ENCODE measurements at regions of chr14 and their contacts with region 1.

Region 1: DNA sequence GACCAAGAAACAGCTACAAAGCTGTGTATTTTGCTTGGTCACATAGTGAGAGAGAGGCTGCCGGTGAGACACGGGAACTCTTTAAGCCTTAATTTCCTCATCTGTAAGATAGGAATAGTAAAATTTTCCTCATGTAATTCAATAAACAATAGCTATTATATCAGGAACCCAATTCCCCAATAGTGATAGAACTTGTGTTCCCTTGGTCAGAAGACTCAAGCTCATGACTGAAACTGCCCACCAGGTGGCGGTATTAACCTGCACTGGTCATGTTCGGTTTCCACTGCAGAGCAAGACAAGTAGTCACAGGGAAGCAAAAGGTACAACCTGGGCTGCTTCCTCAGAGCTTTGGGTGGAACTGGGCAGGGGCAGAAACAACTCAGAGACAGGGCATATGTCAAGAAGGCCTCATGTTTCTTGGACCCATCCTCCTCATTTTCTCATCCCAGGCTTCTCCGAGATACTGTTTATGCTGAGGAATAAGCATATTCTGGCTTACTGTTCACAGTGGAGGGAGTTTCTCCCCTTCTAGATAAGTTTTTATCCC is 4.2 kb upstream of the AJUBA start:
- DNase-seq: peak; percentile 70
- ATAC-seq: peak; percentile 62
- H3K4me3 Mint-ChIP-seq: no peak overlapping the region
- H3K27ac Mint-ChIP-seq: no peak overlapping the region
- H3K4me1 Mint-ChIP-seq: no peaks in the 10 kb centered on the region
- H3K27me3 Mint-ChIP-seq: no peaks in the 10 kb centered on the region
- CTCF ChIP-seq: peak; percentile 91

Region 2: DNA sequence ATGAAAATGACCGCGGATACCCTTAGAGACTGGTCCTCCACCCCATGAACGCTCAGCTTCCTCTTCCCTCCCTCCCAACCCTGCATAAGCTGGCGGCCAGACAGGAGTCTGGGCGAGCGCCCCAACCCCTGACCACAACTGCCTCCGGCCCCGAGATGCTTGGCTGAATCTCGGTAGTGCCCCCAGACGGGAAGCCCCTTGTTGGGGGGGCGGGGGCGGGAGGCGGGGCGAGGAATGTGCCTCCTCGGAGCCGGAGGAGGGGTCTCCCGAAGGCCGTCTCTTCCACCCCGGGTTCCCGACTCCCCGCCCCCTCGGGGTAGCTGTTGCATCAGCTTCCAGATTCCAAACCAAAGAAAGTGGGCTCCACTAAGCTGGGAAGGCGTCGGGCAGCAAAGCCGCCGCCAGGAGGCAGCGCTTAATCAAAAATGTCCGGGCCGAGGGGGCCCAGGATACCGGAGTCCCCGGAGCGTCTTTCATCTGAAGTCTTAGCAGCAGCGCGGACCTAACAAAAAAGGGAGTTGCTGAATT is 163.9 kb before region 1 on chr14:
- CTCF ChIA-PET with region 1: interaction called, 3 read pairs
- POLR2A ChIA-PET with region 1: no interaction called
- intact Hi-C with region 1: loop called (anchors 2 kb)
- DNase-seq: peak; percentile 69
- ATAC-seq: peak; percentile 76
- H3K4me3 Mint-ChIP-seq: peak overlapping the region; percentile 86
- H3K27ac Mint-ChIP-seq: peak overlapping the region; percentile 92
- H3K4me1 Mint-ChIP-seq: peaks cover 60% of the 10 kb centered on the region
- H3K27me3 Mint-ChIP-seq: no peaks in the 10 kb centered on the region
- CTCF ChIP-seq: no peak

Region 3: DNA sequence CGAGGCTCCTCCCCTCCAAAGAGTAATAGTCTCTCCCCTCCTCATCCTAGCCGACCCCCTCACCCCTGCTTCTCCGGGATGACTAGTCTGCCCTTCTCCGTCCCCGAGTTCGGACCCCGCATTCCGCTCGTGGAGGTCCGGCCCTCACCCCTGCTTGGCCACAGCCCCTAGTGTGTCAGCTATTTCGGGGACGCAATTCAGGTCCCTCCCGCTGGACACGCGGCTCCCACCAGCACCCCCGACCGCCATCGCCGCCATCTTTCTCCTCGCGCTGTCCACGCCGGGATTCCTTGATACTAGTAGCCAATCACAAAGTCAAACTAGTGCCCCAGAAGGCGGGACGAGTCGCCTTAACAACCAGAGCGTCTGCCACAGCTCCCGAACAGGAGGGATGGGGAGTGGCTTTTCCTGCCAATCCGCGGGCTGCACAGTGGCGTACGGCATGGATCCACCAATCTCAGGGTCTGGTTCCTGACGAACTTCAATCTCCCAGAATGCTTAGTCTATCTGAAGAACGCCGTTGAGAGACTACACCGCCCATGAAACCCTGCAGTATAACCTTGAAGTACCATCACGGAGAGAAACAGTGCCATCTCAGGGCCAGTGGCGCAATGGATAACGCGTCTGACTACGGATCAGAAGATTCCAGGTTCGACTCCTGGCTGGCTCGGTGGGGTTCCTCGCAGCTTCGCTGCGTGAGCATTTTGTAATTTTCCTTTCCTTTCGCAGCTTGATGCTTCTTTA is 57.3 kb before region 1 on chr14 and contains the start of gene PRMT5:
- CTCF ChIA-PET with region 1: interaction called, 22 read pairs
- POLR2A ChIA-PET with region 1: no interaction called
- intact Hi-C with region 1: loop called (anchors 1 kb)
- DNase-seq: peak; percentile 83
- ATAC-seq: peak; percentile 93
- H3K4me3 Mint-ChIP-seq: no peak within 1 kb of the TSS
- H3K27ac Mint-ChIP-seq: no peak within 1 kb of the TSS
- H3K4me1 Mint-ChIP-seq: peaks cover 14% of the 10 kb centered on the region
- H3K27me3 Mint-ChIP-seq: no peaks in the 10 kb centered on the region
- CTCF ChIP-seq: no peak
- total RNA-seq, gene PRMT5: 75.3 and 96.5 TPM in 2 replicates

Region 4: DNA sequence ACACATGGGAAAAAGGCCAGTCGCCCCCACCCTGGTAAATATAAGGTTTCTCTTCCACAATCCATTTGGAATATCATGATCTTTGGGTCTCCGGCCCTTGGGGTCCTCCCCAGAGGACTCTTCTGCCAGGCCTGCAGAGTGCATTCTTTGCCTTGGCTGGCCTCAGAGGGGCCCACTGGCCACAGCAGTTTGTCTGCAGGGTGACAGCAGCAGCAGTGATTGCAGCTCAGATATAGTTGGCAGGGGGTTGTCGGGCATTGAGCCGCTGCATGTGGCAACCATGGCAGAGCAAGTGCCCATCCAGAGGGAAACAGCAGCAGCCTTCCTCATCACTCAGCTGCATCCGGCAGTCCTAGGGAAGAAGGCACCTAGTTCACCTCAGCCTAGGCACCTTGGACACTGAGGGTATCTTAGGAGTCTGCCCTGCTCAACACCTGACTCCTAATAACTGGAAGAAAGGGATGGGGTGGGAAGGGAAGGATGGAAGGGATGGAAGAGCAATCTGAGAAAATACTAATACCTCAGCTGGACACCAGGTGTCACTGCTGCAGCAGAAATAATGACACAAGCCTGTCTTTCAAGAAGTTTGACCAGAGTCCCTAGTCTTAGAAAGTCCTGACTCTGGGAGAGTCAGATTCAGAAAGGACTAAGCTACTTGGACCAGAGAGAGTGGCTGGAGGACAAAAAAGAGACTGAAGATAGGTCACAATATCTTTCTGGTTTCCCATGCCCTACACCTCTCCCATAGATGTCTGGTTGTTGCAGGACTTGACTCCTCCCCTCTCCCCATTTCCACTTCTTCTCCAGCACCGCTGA is 13.2 kb before region 1 on chr14:
- CTCF ChIA-PET with region 1: interaction called, 152 read pairs
- POLR2A ChIA-PET with region 1: interaction called, 6 read pairs
- intact Hi-C with region 1: loop called (anchors 1 kb)
- DNase-seq: no peak
- ATAC-seq: peak; percentile 68
- H3K4me3 Mint-ChIP-seq: no peak overlapping the region
- H3K27ac Mint-ChIP-seq: no peak overlapping the region
- H3K4me1 Mint-ChIP-seq: peaks cover 5% of the 10 kb centered on the region
- H3K27me3 Mint-ChIP-seq: peaks cover 13% of the 10 kb centered on the region
- CTCF ChIP-seq: no peak

Region 5: DNA sequence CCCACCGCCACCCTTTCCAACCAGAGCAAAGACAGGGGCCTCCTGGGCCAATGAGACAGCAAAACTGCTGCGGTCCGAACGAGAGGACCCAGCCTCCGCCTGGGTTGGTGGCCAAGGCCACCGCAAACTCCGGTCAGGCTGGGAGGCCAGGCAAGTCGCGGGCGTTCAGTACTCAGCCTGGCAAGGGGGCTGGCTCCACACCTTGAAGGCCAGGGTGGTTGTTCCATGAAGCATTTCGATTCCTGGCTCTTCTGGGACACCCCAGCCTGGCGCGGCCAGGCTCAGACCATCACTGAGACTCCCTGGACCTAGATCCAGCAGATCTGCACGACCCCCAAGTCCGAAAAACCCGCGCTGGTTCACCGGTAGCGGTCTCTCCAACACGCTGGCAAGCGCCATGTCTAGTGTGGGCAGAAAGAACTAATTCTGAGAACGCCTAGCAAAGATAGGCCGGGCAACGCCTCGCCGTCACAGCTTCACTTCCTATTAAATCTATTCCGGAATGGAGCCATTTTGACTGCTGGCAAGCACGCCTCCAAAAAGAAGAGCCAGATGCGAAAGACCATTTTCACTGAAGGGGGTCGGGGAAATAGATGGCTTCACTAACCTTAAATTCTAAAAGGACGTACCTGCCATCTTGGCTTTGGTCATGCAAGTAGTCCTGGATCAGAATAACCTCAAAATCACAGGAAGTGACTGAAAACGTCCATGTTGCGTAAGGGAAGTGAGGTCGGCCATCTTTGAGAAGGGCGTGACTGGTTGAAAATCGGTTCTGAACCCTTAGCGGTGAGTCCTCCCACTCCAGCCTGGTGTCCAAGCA is 48.1 kb after region 1 on chr14 and contains the start of gene PSMB5:
- CTCF ChIA-PET with region 1: interaction called, 6 read pairs
- POLR2A ChIA-PET with region 1: no interaction called
- intact Hi-C with region 1: loop called (anchors 1 kb)
- DNase-seq: peak; percentile 67
- ATAC-seq: peak; percentile 93
- H3K4me3 Mint-ChIP-seq: peak within 1 kb of the TSS; percentile 84
- H3K27ac Mint-ChIP-seq: peak within 1 kb of the TSS; percentile 96
- H3K4me1 Mint-ChIP-seq: peaks cover 29% of the 10 kb centered on the region
- H3K27me3 Mint-ChIP-seq: no peaks in the 10 kb centered on the region
- CTCF ChIP-seq: no peak
- total RNA-seq, gene PSMB5: 53.3 and 67.5 TPM in 2 replicates

Region 6: DNA sequence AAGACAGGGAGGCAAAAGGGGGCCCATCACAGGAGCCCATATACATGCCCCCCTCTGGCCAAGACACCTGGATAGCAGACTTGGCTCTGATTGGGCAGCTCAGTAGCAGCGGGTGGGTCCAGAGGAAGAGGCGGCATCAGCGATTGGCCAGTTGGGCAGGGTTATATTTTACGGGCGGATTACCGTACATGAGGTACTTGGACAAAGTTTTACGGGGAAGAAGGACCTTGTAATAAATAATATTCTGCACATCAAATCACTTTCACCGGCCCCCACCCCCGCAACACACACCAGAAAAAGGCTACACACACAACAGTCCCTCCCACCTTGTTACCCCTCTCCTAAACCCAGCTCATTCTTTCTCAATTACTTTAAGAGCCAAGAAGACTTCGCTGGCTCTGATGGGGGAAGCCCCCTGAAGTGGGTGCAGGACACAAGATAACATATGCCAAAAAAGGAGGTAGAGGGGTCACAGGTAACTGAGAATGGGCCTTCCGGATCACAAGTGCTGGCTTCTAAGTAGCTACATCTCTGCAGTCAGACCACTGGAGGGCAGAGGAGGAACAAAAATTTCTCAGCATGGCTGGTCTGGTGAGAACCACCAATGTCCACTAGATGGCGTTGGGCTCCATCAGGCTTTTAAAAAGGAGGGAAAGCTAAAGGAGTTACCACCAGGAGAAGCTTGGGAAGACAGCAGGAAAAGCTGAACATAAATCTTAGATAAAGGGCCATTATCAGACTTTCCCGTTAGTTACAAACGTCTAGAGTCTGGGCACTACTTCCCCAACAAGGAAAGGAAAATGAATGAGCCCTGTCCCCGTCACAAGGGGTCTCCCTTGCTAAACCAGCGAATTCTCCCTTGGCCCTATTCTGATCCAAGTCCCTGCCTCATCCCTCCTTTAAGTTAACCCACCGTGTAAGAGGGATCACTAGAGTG is 82.2 kb after region 1 on chr14:
- CTCF ChIA-PET with region 1: interaction called, 284 read pairs
- POLR2A ChIA-PET with region 1: no interaction called
- intact Hi-C with region 1: no loop called
- DNase-seq: no peak
- ATAC-seq: peak; percentile 85
- H3K4me3 Mint-ChIP-seq: peak overlapping the region; percentile 22
- H3K27ac Mint-ChIP-seq: peak overlapping the region; percentile 50
- H3K4me1 Mint-ChIP-seq: peaks cover 36% of the 10 kb centered on the region
- H3K27me3 Mint-ChIP-seq: no peaks in the 10 kb centered on the region
- CTCF ChIP-seq: peak; percentile 79